B cell (primary cell): ENCODE measurements at regions of chr7 and their contacts with region 1.

Region 1: GRCh38 chr7:129367700-129368388 is 66.4 kb upstream of the STRIP2 start:
- DNase-seq: peak; percentile 79
- ATAC-seq: peak; percentile 85
- H3K4me3 ChIP-seq: peak overlapping the region in 3 of 5 experiments; percentile 15 to 32 (median 23)
- H3K4me3 Mint-ChIP-seq: peak overlapping the region; percentile 69
- H3K27ac ChIP-seq: peak overlapping the region in 1 of 2 donors; percentile 67
- H3K27ac Mint-ChIP-seq: peak overlapping the region; percentile 66
- H3K4me1 ChIP-seq: peaks cover 14 to 15% of the 10 kb centered on the region in 2 donors
- H3K4me1 Mint-ChIP-seq: peaks cover 21% of the 10 kb centered on the region
- H3K27me3 ChIP-seq: no peaks in the 10 kb centered on the region
- H3K27me3 Mint-ChIP-seq: no peaks in the 10 kb centered on the region
- CTCF ChIP-seq: peak; percentile 88

Region 2: GRCh38 chr7:129134356-129134987 is 233.4 kb before region 1 on chr7:
- CTCF ChIA-PET with region 1: no interaction called
- POLR2A ChIA-PET with region 1: no interaction called
- intact Hi-C with region 1: no loop called
- DNase-seq: peak; percentile 30
- ATAC-seq: no peak
- H3K4me3 ChIP-seq: peak overlapping the region in 2 of 5 experiments; percentile 8 to 39
- H3K4me3 Mint-ChIP-seq: peak overlapping the region; percentile 65
- H3K27ac ChIP-seq: peak overlapping the region; percentile 79 to 95
- H3K27ac Mint-ChIP-seq: peak overlapping the region; percentile 95
- H3K4me1 ChIP-seq: peaks cover 44 to 56% of the 10 kb centered on the region in 2 donors
- H3K4me1 Mint-ChIP-seq: peaks cover 52% of the 10 kb centered on the region
- H3K27me3 ChIP-seq: no peaks in the 10 kb centered on the region
- H3K27me3 Mint-ChIP-seq: no peaks in the 10 kb centered on the region
- CTCF ChIP-seq: no peak

Region 3: GRCh38 chr7:129343099-129343700 is 24.6 kb before region 1 on chr7:
- CTCF ChIA-PET with region 1: interaction called, 26 read pairs
- POLR2A ChIA-PET with region 1: no interaction called
- intact Hi-C with region 1: no loop called
- DNase-seq: peak; percentile 58
- ATAC-seq: no peak
- H3K4me3 ChIP-seq: no peak overlapping the region
- H3K4me3 Mint-ChIP-seq: no peak overlapping the region
- H3K27ac ChIP-seq: no peak overlapping the region
- H3K27ac Mint-ChIP-seq: no peak overlapping the region
- H3K4me1 ChIP-seq: no peaks in the 10 kb centered on the region
- H3K4me1 Mint-ChIP-seq: peaks cover 4% of the 10 kb centered on the region
- H3K27me3 ChIP-seq: no peaks in the 10 kb centered on the region
- H3K27me3 Mint-ChIP-seq: no peaks in the 10 kb centered on the region
- CTCF ChIP-seq: peak; percentile 90

Region 4: DNA sequence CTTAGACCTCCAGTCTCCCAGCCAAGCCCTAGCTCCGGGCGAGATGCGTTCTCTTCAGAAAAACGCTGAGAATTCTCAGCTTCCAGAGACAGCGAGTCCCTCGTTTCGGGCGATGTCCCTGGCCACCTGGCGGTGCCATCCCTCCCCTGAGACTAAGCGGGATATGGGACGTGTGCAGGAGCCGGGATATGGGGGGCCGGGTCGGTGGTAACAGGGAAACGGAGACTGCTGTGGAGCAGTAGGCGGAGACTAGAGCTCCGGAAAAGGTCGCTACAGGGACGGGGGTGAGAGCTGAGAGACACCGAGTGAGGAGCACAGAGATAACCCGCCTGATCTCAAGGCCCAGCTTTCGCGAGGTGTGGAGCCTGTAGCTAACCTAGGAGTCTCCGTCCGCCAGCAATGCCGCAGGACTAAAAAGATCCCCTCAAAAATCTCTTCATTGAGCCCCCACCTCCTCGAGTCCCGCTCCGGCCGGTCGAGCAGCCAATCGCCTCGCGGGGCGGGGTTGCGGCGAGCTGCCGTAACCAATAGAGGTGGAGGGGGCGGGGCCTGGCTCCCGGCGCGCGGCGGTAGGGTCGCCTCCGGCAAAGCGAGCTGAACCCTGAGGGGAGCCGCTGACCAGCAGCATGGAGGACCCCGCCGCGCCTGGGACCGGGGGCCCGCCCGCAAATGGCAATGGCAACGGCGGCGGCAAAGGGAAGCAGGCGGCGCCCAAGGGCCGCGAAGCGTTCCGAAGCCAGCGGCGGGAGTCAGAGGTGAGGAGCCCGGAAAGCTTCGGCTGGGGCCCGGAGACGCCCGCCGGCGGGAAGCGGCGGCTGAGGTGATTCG is 66.2 kb after region 1 on chr7 and contains the start of gene STRIP2:
- CTCF ChIA-PET with region 1: interaction called, 12 read pairs
- POLR2A ChIA-PET with region 1: no interaction called
- intact Hi-C with region 1: loop called (anchors 2 kb)
- DNase-seq: peak; percentile 90
- ATAC-seq: peak; percentile 97
- H3K4me3 ChIP-seq: peak within 1 kb of the TSS; percentile 25 to 90 (median 74)
- H3K4me3 Mint-ChIP-seq: peak within 1 kb of the TSS; percentile 95
- H3K27ac ChIP-seq: peak within 1 kb of the TSS in 1 of 2 donors; percentile 56
- H3K27ac Mint-ChIP-seq: peak within 1 kb of the TSS; percentile 26
- H3K4me1 ChIP-seq: peaks cover 16 to 22% of the 10 kb centered on the region in 2 donors
- H3K4me1 Mint-ChIP-seq: peaks cover 22% of the 10 kb centered on the region
- H3K27me3 ChIP-seq: peaks cover 0 to 36% (median 24%) of the 10 kb centered on the region in 4 experiments
- H3K27me3 Mint-ChIP-seq: peaks cover 34% of the 10 kb centered on the region
- CTCF ChIP-seq: peak; percentile 23
- total RNA-seq, gene STRIP2: 0.39 and 0.79 TPM in 2 replicates

Region 5: DNA sequence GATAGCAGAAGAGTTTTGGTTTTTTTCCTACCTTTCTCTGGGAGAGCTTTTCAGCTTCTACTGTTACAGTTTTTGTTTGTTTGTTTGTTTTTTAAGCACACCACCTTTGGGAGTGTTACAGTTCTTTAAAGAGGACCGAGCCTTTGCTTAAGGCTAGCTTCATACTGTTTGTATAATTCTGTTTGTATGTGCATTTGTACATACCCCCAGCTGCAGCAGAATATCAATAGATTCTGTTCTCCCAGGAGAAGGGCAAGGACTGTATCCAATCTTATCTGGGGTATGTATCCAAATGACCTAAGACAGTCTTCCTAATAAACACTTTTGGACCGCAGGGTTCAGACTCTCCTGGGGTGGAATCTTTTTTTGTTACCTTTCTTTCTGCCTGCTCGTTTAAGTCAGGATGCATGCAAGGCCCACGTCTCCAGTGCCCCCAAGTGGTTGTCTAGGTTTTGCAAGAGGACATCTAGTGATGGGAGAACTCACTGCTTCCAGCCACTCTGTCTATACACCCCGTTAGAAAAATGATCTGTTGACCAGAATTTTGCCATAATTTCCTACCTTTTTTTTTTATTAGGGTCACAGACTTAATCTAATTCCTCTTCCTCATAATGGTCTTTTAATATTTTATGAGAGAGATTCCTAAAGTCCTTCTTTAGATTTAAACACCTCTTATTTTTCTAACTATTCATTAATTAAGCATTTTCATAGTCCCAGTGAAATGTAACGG is 267.6 kb after region 1 on chr7:
- CTCF ChIA-PET with region 1: interaction called, 42 read pairs
- POLR2A ChIA-PET with region 1: no interaction called
- intact Hi-C with region 1: loop called (anchors 1 kb)
- DNase-seq: peak; percentile 70
- ATAC-seq: peak; percentile 87
- H3K4me3 ChIP-seq: no peak overlapping the region
- H3K4me3 Mint-ChIP-seq: no peak overlapping the region
- H3K27ac ChIP-seq: peak overlapping the region in 1 of 2 donors; percentile 5
- H3K27ac Mint-ChIP-seq: no peak overlapping the region
- H3K4me1 ChIP-seq: peaks cover 0 to 2% of the 10 kb centered on the region in 2 donors
- H3K4me1 Mint-ChIP-seq: peaks cover 22% of the 10 kb centered on the region
- H3K27me3 ChIP-seq: no peaks in the 10 kb centered on the region
- H3K27me3 Mint-ChIP-seq: no peaks in the 10 kb centered on the region
- CTCF ChIP-seq: peak; percentile 86

Region 6: GRCh38 chr7:130010689-130011412 is 643.0 kb after region 1 on chr7:
- CTCF ChIA-PET with region 1: interaction called, 19 read pairs
- POLR2A ChIA-PET with region 1: no interaction called
- intact Hi-C with region 1: loop called (anchors 2 kb)
- DNase-seq: peak; percentile 91
- ATAC-seq: peak; percentile 97
- H3K4me3 ChIP-seq: no peak overlapping the region
- H3K4me3 Mint-ChIP-seq: no peak overlapping the region
- H3K27ac ChIP-seq: no peak overlapping the region
- H3K27ac Mint-ChIP-seq: peak overlapping the region; percentile 34
- H3K4me1 ChIP-seq: peaks cover 0 to 6% of the 10 kb centered on the region in 2 donors
- H3K4me1 Mint-ChIP-seq: peaks cover 6% of the 10 kb centered on the region
- H3K27me3 ChIP-seq: no peaks in the 10 kb centered on the region
- H3K27me3 Mint-ChIP-seq: no peaks in the 10 kb centered on the region
- CTCF ChIP-seq: peak; percentile 86